ENCODE measurements at regions of chr7 and their contacts with region 1.

Region 1: DNA sequence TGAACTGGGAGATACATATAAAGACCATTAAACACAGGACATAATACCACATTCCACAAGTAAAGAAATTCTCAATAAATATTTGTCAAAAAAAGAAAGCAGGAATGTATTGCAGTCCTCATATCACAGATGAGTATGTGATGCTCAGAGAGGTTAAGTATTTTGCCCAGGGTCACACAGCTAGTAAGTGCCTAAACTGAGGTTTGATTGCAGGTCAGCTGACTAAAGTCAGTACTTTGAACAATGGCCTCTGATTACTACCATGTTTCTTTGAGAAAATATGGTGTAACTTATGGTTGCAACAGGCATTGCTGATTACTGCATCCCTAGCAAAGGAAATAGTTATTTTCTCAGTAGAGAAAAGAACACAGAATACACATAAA is 267.1 kb downstream of the ELMO1 start:
- DNase-seq: no peak
- H3K4me3 ChIP-seq: no peak overlapping the region
- H3K27ac ChIP-seq: no peak overlapping the region
- H3K4me1 ChIP-seq: peaks cover 0 to 2% of the 10 kb centered on the region in 2 experiments; a peak in 1 of 4 replicates
- H3K27me3 ChIP-seq: no peaks in the 10 kb centered on the region
- CTCF ChIP-seq: no peak
- EP300 ChIP-seq: no peak
- RAD21 ChIP-seq: no peak

Region 2: GRCh38 chr7:36448781-36449379 is 732.7 kb before region 1 on chr7:
- CTCF ChIA-PET with region 1: interaction called, 12 read pairs
- POLR2A ChIA-PET with region 1: no interaction called
- DNase-seq: no peak
- H3K4me3 ChIP-seq: no peak overlapping the region
- H3K27ac ChIP-seq: peak overlapping the region; percentile 13 to 55; a peak in 3 of 4 replicates
- H3K4me1 ChIP-seq: peaks cover 3 to 21% of the 10 kb centered on the region in 2 experiments
- H3K27me3 ChIP-seq: no peaks in the 10 kb centered on the region
- CTCF ChIP-seq: no peak
- EP300 ChIP-seq: peak in 1 of 2 experiments; percentile 36; a peak in 1 of 4 replicates
- RAD21 ChIP-seq: no peak

Region 3: DNA sequence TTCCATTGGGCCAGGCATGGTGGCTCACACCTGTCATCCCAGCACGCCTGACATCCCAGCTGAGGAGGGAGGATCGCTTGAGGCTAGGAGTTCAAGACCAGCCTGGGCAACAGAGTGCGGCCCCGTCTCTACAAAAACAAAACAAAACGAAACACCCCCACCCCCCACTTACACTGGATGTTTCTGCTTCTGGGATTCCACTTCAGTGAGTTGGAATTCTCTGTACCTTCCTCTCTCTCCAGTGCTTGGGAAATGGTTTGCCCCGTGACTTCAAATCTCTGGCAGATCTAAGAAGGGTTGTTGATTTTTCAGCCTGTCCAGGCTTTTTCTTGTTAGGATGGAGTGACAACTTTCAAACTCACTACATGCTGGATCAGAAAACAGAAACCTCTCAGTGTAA is 685.0 kb before region 1 on chr7:
- CTCF ChIA-PET with region 1: interaction called, 303 read pairs
- POLR2A ChIA-PET with region 1: no interaction called
- DNase-seq: no peak
- H3K4me3 ChIP-seq: no peak overlapping the region
- H3K27ac ChIP-seq: no peak overlapping the region
- H3K4me1 ChIP-seq: no peaks in the 10 kb centered on the region
- H3K27me3 ChIP-seq: no peaks in the 10 kb centered on the region
- CTCF ChIP-seq: no peak
- EP300 ChIP-seq: no peak
- RAD21 ChIP-seq: no peak

Region 4: GRCh38 chr7:36683695-36684357 is 497.7 kb before region 1 on chr7:
- CTCF ChIA-PET with region 1: interaction called, 11 read pairs
- POLR2A ChIA-PET with region 1: no interaction called
- DNase-seq: no peak
- H3K4me3 ChIP-seq: no peak overlapping the region
- H3K27ac ChIP-seq: no peak overlapping the region
- H3K4me1 ChIP-seq: no peaks in the 10 kb centered on the region; a peak in 2 of 4 replicates
- H3K27me3 ChIP-seq: no peaks in the 10 kb centered on the region
- CTCF ChIP-seq: no peak
- EP300 ChIP-seq: no peak
- RAD21 ChIP-seq: no peak

Region 5: GRCh38 chr7:36962367-36962766 is 219.2 kb before region 1 on chr7:
- CTCF ChIA-PET with region 1: interaction called, 184 read pairs
- POLR2A ChIA-PET with region 1: interaction called, 12 read pairs
- DNase-seq: no peak
- H3K4me3 ChIP-seq: no peak overlapping the region
- H3K27ac ChIP-seq: no peak overlapping the region
- H3K4me1 ChIP-seq: peaks cover 0 to 30% of the 10 kb centered on the region in 2 experiments; a peak in 2 of 4 replicates
- H3K27me3 ChIP-seq: no peaks in the 10 kb centered on the region
- CTCF ChIP-seq: no peak
- EP300 ChIP-seq: no peak
- RAD21 ChIP-seq: no peak

Region 6: DNA sequence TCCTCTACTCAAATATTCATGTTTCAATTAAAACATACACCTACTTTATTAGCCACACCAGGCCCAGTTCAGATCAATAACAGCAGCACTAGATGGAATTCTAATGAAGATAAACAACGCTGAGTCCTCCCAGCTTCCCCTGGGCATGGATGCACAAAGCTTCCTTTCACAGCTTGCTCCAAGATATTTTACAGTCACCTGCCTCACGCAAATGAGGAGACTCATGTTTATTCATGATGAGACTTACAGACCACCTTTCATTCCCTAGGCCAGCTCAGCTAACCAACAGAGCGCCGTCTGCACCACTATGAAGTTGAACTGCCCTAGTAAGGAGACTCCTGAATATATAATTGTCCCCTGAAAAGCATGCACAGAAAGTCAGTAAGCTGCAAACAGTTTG is 174.3 kb before region 1 on chr7:
- CTCF ChIA-PET with region 1: interaction called, 22 read pairs
- POLR2A ChIA-PET with region 1: no interaction called
- DNase-seq: no peak
- H3K4me3 ChIP-seq: no peak overlapping the region
- H3K27ac ChIP-seq: peak overlapping the region in 1 of 2 experiments; percentile 30; a peak in 2 of 4 replicates
- H3K4me1 ChIP-seq: peaks cover 0 to 48% of the 10 kb centered on the region in 2 experiments; a peak in 2 of 4 replicates
- H3K27me3 ChIP-seq: peaks cover 31% of the 10 kb centered on the region
- CTCF ChIP-seq: no peak
- EP300 ChIP-seq: no peak
- RAD21 ChIP-seq: no peak

Region 7: GRCh38 chr7:37247861-37248260 is 66.3 kb after region 1 on chr7:
- CTCF ChIA-PET with region 1: no interaction called
- POLR2A ChIA-PET with region 1: no interaction called
- DNase-seq: no peak
- H3K4me3 ChIP-seq: no peak overlapping the region
- H3K27ac ChIP-seq: no peak overlapping the region
- H3K4me1 ChIP-seq: no peaks in the 10 kb centered on the region
- H3K27me3 ChIP-seq: no peaks in the 10 kb centered on the region
- CTCF ChIP-seq: no peak
- EP300 ChIP-seq: no peak
- RAD21 ChIP-seq: no peak

Region 8: DNA sequence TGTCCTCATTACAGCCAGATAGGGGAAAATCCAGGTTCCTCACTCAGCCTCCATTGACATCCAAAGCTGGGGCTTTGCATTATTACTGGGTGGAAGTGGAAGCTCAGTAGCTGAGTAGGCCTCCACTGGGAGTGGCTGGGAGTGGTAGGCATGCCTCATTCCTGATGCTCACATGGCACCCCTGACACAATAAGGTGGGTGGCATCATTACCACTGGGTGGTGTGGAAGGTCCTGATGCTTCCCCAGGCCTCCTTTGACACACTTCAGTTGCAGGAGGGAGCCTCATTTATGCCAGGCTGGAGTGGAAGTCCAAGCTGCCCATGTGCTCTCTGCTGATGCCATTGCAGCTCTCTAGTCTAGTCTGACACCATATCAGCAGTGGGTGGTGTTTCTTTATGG is 453.8 kb after region 1 on chr7:
- CTCF ChIA-PET with region 1: no interaction called
- POLR2A ChIA-PET with region 1: no interaction called
- DNase-seq: no peak
- H3K4me3 ChIP-seq: no peak overlapping the region
- H3K27ac ChIP-seq: no peak overlapping the region
- H3K4me1 ChIP-seq: no peaks in the 10 kb centered on the region
- H3K27me3 ChIP-seq: no peaks in the 10 kb centered on the region
- CTCF ChIP-seq: no peak
- EP300 ChIP-seq: no peak
- RAD21 ChIP-seq: no peak